Activated T-helper 2 cell treated with anti-CD3 and anti-CD28 coated beads, Interferon-gamma antibody, Interleukin-2, Interleukin-4, amounts not matched to agents 10 μg/mL and 5 μg/mL and 100 μg/mL, durations not matched to agents 14 hours and 24 hours and 36 hours (primary cell): ENCODE measurements at regions of chr2 and their contacts with region 1.

Region 1: GRCh38 chr2:216216951-216217903 is 108.1 kb downstream of the XRCC5 start:
- DNase-seq: no peak
- H3K4me3 Mint-ChIP-seq: no peak overlapping the region
- H3K27ac Mint-ChIP-seq: peak overlapping the region; percentile 46
- H3K4me1 Mint-ChIP-seq: peaks cover 57% of the 10 kb centered on the region
- H3K27me3 Mint-ChIP-seq: no peaks in the 10 kb centered on the region

Region 2: DNA sequence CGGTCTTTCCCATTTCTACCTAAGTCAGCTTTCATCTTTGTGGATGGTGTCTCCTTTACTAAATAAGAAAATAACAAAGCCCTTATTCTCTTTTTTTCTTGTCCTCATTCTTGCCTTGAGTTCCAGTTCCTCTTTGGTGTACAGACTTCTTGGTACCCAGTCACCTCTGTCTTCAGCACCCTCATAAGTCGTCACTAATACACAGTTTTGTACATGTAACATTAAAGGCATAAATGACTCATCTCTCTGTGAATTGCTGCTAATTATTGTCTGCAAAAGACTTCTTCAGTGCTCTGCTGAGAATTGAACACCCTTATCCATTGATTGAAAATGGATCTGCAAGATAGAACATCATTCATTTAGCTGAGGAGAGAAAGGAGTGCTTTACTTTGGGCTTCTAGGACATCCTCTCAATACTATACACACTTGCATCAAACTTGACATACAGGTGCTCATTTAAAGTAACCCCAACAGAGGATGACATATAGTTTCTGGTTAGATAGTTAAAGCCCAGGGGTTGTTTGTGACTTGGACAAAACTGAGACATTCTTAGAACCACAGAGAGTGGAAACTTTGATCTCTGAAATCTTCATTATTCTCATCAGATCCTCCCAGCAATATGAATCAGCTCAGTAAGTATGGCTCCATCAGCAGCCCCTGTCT is 11.1 kb before region 1 on chr2:
- intact Hi-C with region 1: loop called (anchors 1 kb)
- DNase-seq: no peak
- H3K4me3 Mint-ChIP-seq: no peak overlapping the region
- H3K27ac Mint-ChIP-seq: peak overlapping the region; percentile 91
- H3K4me1 Mint-ChIP-seq: peaks cover 42% of the 10 kb centered on the region
- H3K27me3 Mint-ChIP-seq: no peaks in the 10 kb centered on the region

Region 3: GRCh38 chr2:216287251-216287650 is 70.0 kb after region 1 on chr2:
- intact Hi-C with region 1: no loop called
- DNase-seq: no peak
- H3K4me3 Mint-ChIP-seq: no peak overlapping the region
- H3K27ac Mint-ChIP-seq: no peak overlapping the region
- H3K4me1 Mint-ChIP-seq: no peaks in the 10 kb centered on the region
- H3K27me3 Mint-ChIP-seq: no peaks in the 10 kb centered on the region

Region 4: GRCh38 chr2:216490061-216490460 is 272.8 kb after region 1 on chr2:
- intact Hi-C with region 1: no loop called
- DNase-seq: no peak
- H3K4me3 Mint-ChIP-seq: no peak overlapping the region
- H3K27ac Mint-ChIP-seq: no peak overlapping the region
- H3K4me1 Mint-ChIP-seq: peaks cover 5% of the 10 kb centered on the region
- H3K27me3 Mint-ChIP-seq: no peaks in the 10 kb centered on the region